Activated naive CD4-positive, alpha-beta T cell treated with anti-CD3 and anti-CD28 coated beads for 36 hours (primary cell): ENCODE measurements at regions of chr4 and their contacts with region 1.

Region 1: DNA sequence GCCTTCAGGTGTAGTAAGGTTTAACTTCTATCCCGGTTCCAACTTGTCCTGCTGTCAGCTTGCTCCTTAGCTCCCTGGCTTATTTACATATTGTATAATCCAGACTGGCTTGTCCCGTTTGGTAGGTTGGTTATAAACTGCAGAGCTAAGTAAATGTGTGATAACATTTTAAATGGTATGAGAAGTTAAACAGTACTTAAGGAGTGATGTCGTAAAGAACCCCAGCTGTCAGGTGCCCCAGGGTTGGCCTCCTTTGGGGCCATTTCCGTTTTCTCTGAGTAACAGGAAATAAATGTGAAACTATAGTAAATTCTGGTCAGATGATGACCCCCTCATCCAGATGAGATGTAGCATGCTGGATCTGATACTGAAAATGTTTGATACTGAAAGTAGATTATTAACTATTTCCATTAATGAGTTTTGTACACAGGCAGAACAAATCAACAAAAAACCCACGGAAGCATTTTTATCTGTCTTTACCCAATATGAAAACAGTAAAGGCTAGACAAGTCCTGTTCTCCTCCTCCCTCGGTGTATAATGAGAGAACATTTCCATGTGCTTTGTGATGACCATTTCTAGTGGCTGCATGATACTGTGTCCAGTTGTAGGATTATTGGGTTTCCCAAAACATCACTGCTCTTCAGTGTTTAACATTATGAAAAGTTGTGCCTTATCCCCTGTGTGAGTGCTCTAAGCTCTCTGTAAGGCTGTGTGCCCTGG is 22.4 kb downstream of the GAB1 start:
- DNase-seq: peak; percentile 69
- H3K4me3 Mint-ChIP-seq: peak overlapping the region; percentile 32
- H3K27ac Mint-ChIP-seq: peak overlapping the region; percentile 72
- H3K4me1 Mint-ChIP-seq: peaks cover 21% of the 10 kb centered on the region
- H3K27me3 Mint-ChIP-seq: no peaks in the 10 kb centered on the region

Region 2: DNA sequence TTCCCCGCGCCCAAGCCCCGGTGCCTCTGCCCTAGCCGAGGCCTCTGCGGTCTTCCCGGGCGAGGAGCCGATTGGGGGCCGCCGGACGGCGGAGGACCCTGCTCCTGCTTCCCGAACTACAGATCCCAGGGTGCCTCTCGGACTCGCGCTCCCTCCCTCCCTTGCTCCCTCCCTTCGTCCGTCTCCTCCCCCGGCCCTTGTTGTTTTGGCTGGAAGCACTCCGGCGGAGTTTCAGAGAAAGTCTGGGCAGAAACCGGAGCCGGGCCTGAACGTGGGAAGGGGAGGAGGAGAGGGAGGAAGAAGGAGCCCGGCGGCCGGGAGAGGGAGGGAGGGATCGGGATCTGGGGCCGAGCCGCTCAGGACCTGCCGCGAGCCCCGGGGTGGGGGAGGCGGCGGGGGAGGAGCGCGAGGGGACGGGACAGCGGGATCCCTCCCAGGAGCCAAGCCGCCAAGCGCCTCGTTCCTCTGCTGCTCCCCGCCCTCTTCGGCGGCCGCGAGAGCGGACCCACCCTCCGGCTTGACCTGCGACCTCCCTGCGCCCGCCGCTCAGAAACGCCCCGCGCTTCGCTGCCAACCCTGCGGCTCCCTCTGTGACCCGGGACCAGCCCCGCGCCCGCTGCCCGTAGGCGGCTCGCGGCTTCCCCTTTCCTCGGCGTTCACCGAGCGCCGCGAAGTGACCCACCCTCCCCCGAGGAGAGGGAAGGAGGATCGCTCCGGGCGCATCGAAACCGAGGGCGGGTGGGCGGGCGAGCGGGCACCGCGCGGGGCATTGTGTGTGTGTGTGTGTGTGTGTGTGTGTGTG is 22.9 kb before region 1 on chr4:
- CTCF ChIA-PET with region 1: no interaction called
- intact Hi-C with region 1: loop called (anchors 1 kb)
- DNase-seq: peak; percentile 20
- H3K4me3 Mint-ChIP-seq: peak overlapping the region; percentile 75
- H3K27ac Mint-ChIP-seq: no peak overlapping the region
- H3K4me1 Mint-ChIP-seq: peaks cover 3% of the 10 kb centered on the region
- H3K27me3 Mint-ChIP-seq: peaks cover 40% of the 10 kb centered on the region